ENCODE measurements at regions of chr10 and their contacts with region 1.

Region 1: GRCh38 chr10:52779541-52780390 is 7.2 kb upstream of the MBL2 start:
- DNase-seq: peak; percentile 2 to 36 (median 15)
- H3K4me3 ChIP-seq: no peak overlapping the region
- H3K4me3 Mint-ChIP-seq: no peak overlapping the region
- H3K27ac ChIP-seq: no peak overlapping the region
- H3K27ac Mint-ChIP-seq: no peak overlapping the region
- H3K4me1 ChIP-seq: peaks cover 0 to 5% of the 10 kb centered on the region in 2 donors
- H3K4me1 Mint-ChIP-seq: peaks cover 2% of the 10 kb centered on the region
- H3K27me3 ChIP-seq: no peaks in the 10 kb centered on the region
- H3K27me3 Mint-ChIP-seq: peaks cover 0 to 7% (median 3%) of the 10 kb centered on the region in 3 donors
- CTCF ChIP-seq: peak; percentile 93

Region 2: DNA sequence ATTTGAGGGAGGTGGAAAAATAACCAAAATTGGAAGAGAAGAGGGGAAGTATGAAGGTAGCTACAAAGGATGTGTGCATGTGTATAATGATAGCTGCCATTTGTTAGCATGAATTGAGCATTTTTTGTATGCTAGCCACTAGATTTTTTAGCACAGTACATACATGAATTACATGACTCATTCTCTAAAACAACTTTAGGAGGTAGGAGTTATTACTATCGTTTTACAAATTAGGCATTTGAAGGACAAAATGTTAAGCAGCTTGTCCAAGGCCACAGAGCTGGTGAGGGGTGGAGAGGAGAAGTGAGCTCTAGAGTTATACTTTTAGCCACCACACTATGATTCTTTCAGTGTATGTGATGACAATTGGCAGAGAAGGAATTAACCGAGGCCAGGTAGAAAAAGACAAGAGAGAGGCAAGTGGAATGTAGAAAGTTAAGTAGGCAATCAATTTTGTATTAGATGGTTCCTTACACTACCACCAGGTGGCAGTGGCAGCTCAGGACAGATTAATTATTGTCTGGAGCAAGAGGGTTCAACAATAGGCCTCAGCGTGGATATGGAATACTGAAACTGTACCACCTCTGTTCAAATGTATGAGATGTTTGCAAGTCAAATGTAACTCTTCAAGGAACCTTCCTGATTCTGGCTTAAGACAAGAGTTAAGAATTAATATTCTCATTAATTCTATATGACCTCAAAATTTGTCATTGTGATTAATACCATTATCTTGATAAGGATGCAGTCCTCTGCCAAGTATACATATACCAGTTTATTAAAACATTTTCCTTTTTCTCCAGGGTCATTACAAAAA is 135.2 kb before region 1 on chr10:
- intact Hi-C with region 1: loop called (anchors 5 kb)
- DNase-seq: peak in 2 of 3 donors; percentile 0 to 6
- H3K4me3 ChIP-seq: no peak overlapping the region
- H3K4me3 Mint-ChIP-seq: no peak overlapping the region
- H3K27ac ChIP-seq: no peak overlapping the region
- H3K27ac Mint-ChIP-seq: peak overlapping the region in 1 of 7 donors; percentile 48
- H3K4me1 ChIP-seq: no peaks in the 10 kb centered on the region
- H3K4me1 Mint-ChIP-seq: no peaks in the 10 kb centered on the region
- H3K27me3 ChIP-seq: no peaks in the 10 kb centered on the region
- H3K27me3 Mint-ChIP-seq: no peaks in the 10 kb centered on the region
- CTCF ChIP-seq: peak; percentile 76

Region 3: GRCh38 chr10:52740913-52741675 is 38.7 kb before region 1 on chr10:
- intact Hi-C with region 1: loop called (anchors 2 to 5 kb)
- DNase-seq: peak in 2 of 3 donors; percentile 25 to 37
- H3K4me3 ChIP-seq: no peak overlapping the region
- H3K4me3 Mint-ChIP-seq: no peak overlapping the region
- H3K27ac ChIP-seq: no peak overlapping the region
- H3K27ac Mint-ChIP-seq: no peak overlapping the region
- H3K4me1 ChIP-seq: no peaks in the 10 kb centered on the region
- H3K4me1 Mint-ChIP-seq: no peaks in the 10 kb centered on the region
- H3K27me3 ChIP-seq: no peaks in the 10 kb centered on the region
- H3K27me3 Mint-ChIP-seq: peaks cover 0 to 4% (median 0%) of the 10 kb centered on the region in 3 donors
- CTCF ChIP-seq: peak; percentile 98